Activated CD4-positive, alpha-beta T cell treated with anti-CD3 and anti-CD28 coated beads for 36 hours (primary cell): ENCODE measurements at regions of chr7 and their contacts with region 1.

Region 1: GRCh38 chr7:80095545-80095944 is 39.1 kb upstream of the GNAI1 start:
- DNase-seq: no peak
- ATAC-seq: no peak
- H3K4me3 Mint-ChIP-seq: no peak overlapping the region
- H3K27ac Mint-ChIP-seq: no peak overlapping the region
- H3K4me1 Mint-ChIP-seq: no peaks in the 10 kb centered on the region
- H3K27me3 Mint-ChIP-seq: no peaks in the 10 kb centered on the region

Region 2: GRCh38 chr7:79953130-79953529 is 142.4 kb before region 1 on chr7:
- CTCF ChIA-PET with region 1: no interaction called
- POLR2A ChIA-PET with region 1: no interaction called
- intact Hi-C with region 1: no loop called
- DNase-seq: no peak
- ATAC-seq: no peak
- H3K4me3 Mint-ChIP-seq: no peak overlapping the region
- H3K27ac Mint-ChIP-seq: no peak overlapping the region
- H3K4me1 Mint-ChIP-seq: no peaks in the 10 kb centered on the region
- H3K27me3 Mint-ChIP-seq: no peaks in the 10 kb centered on the region

Region 3: DNA sequence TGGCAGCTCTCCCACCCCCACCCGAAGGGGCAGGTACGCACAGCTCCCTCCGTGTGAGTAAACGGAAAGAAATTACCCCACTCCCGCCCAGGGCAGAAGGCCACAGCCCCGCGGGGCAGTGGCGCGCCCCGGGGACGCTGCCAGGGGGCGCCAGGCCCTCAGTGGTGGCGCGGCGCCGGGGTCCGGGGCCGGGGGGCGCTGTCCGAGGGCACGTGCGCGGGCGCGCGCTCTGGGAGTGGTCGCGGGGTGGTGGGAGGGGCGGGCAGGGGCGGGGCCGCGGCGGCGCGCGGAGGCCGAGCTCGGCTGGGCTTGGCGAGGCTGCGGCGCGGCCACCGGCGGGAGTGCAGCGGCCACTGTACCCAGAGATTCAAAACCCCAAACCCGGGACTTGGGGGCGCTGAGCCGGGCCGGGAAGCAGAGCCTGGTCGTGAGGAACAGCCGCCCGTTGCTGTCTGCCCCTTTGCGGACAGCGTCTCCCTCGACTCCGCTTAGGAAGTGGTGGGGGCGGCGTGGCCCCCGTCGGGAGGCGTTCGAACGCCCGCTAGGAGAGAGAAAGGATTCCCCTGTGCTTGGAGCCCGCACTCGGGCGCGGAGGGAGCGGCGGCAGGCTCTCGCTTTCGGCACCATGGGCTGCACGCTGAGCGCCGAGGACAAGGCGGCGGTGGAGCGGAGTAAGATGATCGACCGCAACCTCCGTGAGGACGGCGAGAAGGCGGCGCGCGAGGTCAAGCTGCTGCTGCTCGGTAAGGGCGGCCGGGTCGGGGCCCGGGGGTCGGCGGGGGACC is 39.2 kb after region 1 on chr7 and contains the start of gene GNAI1:
- CTCF ChIA-PET with region 1: no interaction called
- POLR2A ChIA-PET with region 1: no interaction called
- intact Hi-C with region 1: no loop called
- DNase-seq: peak; percentile 51
- ATAC-seq: peak; percentile 31
- H3K4me3 Mint-ChIP-seq: peak within 1 kb of the TSS; percentile 68
- H3K27ac Mint-ChIP-seq: peak within 1 kb of the TSS; percentile 85
- H3K4me1 Mint-ChIP-seq: peaks cover 35% of the 10 kb centered on the region
- H3K27me3 Mint-ChIP-seq: peaks cover 44% of the 10 kb centered on the region
- total RNA-seq, gene GNAI1: 3.6 to 4.1 TPM

Region 4: GRCh38 chr7:80392229-80393169 is 297.0 kb after region 1 on chr7:
- CTCF ChIA-PET with region 1: interaction called, 7 read pairs
- POLR2A ChIA-PET with region 1: no interaction called
- intact Hi-C with region 1: loop called (anchors 1 to 10 kb)
- DNase-seq: no peak
- ATAC-seq: no peak
- H3K4me3 Mint-ChIP-seq: no peak overlapping the region
- H3K27ac Mint-ChIP-seq: no peak overlapping the region
- H3K4me1 Mint-ChIP-seq: no peaks in the 10 kb centered on the region
- H3K27me3 Mint-ChIP-seq: no peaks in the 10 kb centered on the region

Region 5: DNA sequence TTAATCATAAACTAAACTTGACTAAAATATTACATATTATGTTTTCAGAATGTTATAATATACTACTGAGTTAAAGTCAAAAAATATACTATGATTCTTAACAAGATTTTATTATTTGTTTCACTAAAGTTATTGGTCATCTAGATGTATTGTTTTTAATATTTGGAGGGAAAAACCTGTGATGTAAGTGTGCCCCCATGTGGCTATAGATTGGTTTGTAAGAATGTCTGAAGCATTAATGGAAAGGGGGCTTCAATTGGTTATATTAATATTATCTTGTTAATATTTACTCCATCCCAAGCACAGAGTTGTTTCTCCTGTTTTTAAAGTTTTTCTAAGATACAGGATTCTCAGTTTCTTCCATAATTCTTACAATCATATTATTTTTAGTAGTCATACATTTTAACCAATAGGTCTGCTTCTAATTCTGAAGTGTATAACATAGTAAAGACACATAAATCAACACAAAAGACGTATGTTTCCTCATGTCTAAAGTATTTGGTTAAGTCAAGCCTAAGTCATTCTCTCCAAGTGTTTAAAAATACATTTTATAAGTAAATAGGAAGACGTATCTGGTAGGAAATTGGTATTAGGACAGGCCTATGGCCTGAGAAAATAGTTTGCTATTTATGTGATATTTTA is 358.3 kb after region 1 on chr7:
- CTCF ChIA-PET with region 1: no interaction called
- POLR2A ChIA-PET with region 1: no interaction called
- intact Hi-C with region 1: loop called (anchors 1 to 5 kb)
- DNase-seq: no peak
- ATAC-seq: no peak
- H3K4me3 Mint-ChIP-seq: no peak overlapping the region
- H3K27ac Mint-ChIP-seq: no peak overlapping the region
- H3K4me1 Mint-ChIP-seq: no peaks in the 10 kb centered on the region
- H3K27me3 Mint-ChIP-seq: no peaks in the 10 kb centered on the region